T-cell (primary cell): ENCODE measurements at regions of chr17 and their contacts with region 1.

Region 1: GRCh38 chr17:46061435-46061834 is 62.4 kb downstream of the STH start:
- DNase-seq: no peak
- ATAC-seq: peak in 1 of 4 experiments; percentile 44
- H3K4me3 ChIP-seq: no peak overlapping the region
- H3K4me3 Mint-ChIP-seq: no peak overlapping the region
- H3K27ac ChIP-seq: no peak overlapping the region
- H3K27ac Mint-ChIP-seq: no peak overlapping the region
- H3K4me1 ChIP-seq: no peaks in the 10 kb centered on the region
- H3K4me1 Mint-ChIP-seq: peaks cover 43 to 49% (median 45%) of the 10 kb centered on the region in 3 donors
- H3K27me3 ChIP-seq: no peaks in the 10 kb centered on the region
- H3K27me3 Mint-ChIP-seq: no peaks in the 10 kb centered on the region

Region 2: DNA sequence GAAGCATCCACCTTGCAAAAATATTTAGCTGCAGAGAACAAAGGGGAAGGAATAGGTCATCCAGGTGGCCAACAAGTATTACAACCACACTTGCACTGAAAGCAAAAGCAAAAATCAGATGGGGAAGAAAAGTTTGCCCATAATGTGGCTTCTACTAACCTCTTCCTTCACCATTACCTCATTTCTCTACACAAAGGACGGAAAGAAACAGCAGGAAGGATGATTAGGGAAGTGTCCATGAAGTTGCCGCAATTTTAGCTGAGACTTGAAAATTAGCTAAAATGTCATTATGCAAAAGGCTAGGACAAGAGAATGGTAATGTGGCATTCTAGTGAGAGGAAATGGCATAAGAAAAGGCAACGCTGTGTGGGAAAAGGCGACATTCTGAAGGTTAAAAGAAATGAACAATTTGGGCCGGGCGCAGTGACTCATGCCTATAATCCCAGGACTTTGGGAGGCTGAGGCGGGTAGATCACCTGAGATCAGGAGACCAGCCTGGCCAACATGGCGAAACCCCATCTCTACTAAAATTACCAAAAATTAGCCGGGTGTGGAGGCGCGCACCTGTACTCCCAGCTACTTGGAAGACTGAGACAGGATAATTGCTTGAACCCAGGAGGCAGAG is 118.1 kb after region 1 on chr17:
- CTCF ChIA-PET with region 1: interaction called in 1 of 2 experiments, 10 read pairs
- POLR2A ChIA-PET with region 1: no interaction called
- DNase-seq: no peak
- ATAC-seq: peak in 1 of 4 experiments; percentile 56
- H3K4me3 ChIP-seq: no peak overlapping the region
- H3K4me3 Mint-ChIP-seq: peak overlapping the region; percentile 38 to 71 (median 45)
- H3K27ac ChIP-seq: no peak overlapping the region
- H3K27ac Mint-ChIP-seq: peak overlapping the region; percentile 48 to 73
- H3K4me1 ChIP-seq: peaks cover 55 to 66% of the 10 kb centered on the region in 2 experiments
- H3K4me1 Mint-ChIP-seq: peaks cover 91 to 95% (median 94%) of the 10 kb centered on the region in 3 donors
- H3K27me3 ChIP-seq: no peaks in the 10 kb centered on the region
- H3K27me3 Mint-ChIP-seq: no peaks in the 10 kb centered on the region